Astrocyte of the cerebellum (primary cell): ENCODE measurements at regions of chr4 and their contacts with region 1.

Region 1: GRCh38 chr4:185137233-185137925 is 5.7 kb upstream of the SLC25A4 start:
- DNase-seq: no peak
- H3K4me3 ChIP-seq: no peak overlapping the region
- CTCF ChIP-seq: no peak

Region 2: DNA sequence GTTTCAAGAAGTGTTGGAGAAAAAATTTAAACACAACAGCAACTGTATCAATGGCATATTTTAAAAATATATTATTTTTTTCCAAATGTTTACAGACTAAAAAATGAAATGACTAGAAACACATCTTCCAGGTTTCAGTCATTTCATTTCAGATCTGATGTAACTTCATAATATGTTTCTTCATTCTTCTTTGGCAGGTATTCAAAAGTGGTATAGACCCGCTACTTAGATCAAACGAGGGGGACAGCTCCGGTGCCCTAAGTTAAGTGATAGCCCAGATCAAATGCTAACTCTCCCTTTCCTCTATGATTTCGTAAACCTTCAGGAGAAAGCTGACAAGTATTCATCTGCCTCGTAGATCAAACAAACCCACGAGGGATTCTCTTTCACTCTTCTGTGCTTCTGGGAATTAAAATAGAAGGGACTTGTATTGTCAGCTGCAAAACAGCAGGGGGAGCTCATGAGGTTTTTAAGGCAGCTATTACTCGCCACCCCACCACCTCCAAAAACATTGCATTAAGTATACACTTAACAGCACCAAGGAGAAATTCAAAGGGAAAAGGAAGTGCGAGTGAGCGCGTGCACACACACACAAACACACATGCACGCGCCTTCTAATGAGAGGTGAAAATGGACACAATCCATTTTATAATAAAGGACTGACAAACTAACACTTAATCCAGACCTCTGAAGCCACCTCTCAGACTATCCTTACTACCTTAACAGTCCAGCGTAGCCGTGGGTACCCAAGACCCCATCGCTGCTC is 97.7 kb before region 1 on chr4:
- in situ Hi-C with region 1: loop called (anchors 5 kb)
- DNase-seq: peak; percentile 51
- H3K4me3 ChIP-seq: no peak overlapping the region
- CTCF ChIP-seq: peak; percentile 79